ENCODE measurements at regions of chr22 and their contacts with region 1.

Region 1: DNA sequence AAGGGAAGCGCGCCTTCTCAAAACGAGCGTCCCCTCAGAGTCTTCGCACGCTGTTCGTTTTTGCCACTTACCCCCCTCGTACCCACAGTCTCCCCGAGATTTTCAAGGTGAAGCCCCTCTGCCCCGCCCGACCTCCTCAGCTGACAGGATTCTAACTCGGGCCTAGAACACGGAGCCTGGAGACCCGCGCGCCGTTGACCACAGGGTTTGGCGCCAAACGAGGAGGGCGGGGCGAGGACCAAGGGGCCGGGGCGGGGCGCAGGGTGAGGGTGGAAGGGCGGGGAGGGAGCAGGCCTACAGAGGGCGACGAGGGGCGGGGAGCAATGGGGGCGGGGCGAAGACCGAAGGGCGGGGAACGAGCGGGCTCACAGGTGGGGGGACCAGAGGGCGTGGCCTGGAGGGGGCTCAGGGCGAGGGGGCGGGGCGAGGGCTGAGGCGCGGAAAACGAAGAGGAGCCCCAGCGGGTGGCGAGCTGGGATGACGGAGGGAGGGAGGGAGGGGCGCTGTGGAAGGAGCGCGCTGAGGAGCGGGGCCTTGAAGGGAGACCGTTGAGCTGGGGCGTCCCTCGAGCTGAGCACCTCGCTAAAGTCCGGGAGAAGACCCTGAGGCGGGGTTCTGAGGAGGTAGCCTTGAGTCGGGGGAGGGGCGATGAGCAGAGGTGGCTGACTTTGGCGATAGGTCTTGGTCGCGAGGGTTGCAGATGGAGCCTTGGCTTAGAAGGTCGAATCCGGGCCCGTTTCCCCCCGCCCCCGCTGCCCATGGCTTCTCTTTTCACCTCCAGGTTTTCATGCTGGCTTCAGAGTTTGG is at the start of gene DMC1:
- DNase-seq: peak; percentile 96 to 98 (median 98)
- H3K4me3 ChIP-seq: peak within 1 kb of the TSS; percentile 74
- H3K27ac ChIP-seq: peak within 1 kb of the TSS; percentile 65 to 85
- H3K4me1 ChIP-seq: peaks cover 2% of the 10 kb centered on the region
- H3K27me3 ChIP-seq: no peaks in the 10 kb centered on the region
- CTCF ChIP-seq: peak in 1 of 3 donors; percentile 19
- EP300 ChIP-seq: no peak
- POLR2A ChIP-seq: peak; percentile 47
- total RNA-seq, gene DMC1: 0.95 to 12.2 (median 2.1) TPM

Region 2: GRCh38 chr22:38051900-38052862 is 518.0 kb before region 1 on chr22:
- intact Hi-C with region 1: loop called in 3 of 4 experiments (anchors 2 to 5 kb)
- DNase-seq: peak; percentile 67 to 87 (median 81)
- H3K4me3 ChIP-seq: no peak overlapping the region
- H3K27ac ChIP-seq: no peak overlapping the region
- H3K4me1 ChIP-seq: peaks cover 6% of the 10 kb centered on the region
- H3K27me3 ChIP-seq: no peaks in the 10 kb centered on the region
- CTCF ChIP-seq: peak; percentile 43 to 94 (median 89)
- EP300 ChIP-seq: no peak
- POLR2A ChIP-seq: no peak

Region 3: DNA sequence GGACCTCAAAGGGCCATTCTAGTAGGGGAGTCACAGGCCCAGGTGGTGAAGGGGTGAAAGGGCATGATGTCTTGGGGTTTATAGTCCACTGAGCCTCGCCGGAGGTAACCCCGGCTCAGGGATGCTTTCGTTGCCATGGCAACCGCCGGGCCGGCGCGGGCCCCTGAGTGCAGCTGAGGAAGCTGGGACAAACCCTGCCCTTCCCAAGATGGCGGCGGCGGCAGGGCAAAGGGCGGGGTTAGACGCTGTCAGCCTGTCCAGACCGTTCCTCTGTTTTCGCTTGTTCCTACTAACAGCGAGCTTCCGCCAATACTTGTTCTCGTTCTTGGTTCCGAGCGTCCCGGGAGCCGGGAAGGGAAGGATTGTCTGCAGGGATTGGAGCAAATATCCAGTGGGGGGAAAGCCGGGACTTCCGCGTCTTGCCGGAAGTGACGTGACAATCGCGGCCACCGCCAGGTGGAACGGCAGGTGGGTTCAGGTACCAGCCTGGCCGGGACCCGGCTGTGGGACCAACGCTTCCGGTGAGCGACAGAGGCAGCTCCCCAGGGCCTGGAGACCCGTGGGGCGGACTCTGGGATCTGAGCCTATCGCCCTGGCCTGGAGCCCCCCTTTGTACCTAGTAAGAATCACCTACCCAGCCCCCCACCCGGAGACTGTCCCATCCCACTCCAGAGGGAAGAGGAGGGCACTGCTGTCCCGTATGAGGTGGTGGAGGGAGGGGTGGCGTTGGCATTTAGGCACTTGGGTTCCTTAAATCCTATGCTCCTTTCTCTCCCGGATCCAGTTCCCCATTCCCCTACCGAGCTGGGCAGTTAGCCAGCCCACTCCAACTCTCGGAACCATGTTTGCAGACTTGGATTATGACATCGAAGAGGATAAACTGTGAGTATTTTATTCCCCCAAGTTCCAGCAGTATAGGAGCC is 512.9 kb before region 1 on chr22 and contains the start of gene PICK1:
- intact Hi-C with region 1: loop called in 3 of 4 experiments (anchors 2 to 5 kb)
- DNase-seq: peak; percentile 89 to 94 (median 93)
- H3K4me3 ChIP-seq: peak within 1 kb of the TSS; percentile 56
- H3K27ac ChIP-seq: peak within 1 kb of the TSS; percentile 1 to 85
- H3K4me1 ChIP-seq: peaks cover 9% of the 10 kb centered on the region
- H3K27me3 ChIP-seq: no peaks in the 10 kb centered on the region
- CTCF ChIP-seq: peak in 2 of 3 donors; percentile 28 to 34
- EP300 ChIP-seq: no peak
- POLR2A ChIP-seq: peak; percentile 34
- total RNA-seq, gene PICK1: 26.0 to 47.7 (median 35.1) TPM

Region 4: GRCh38 chr22:38506118-38506962 is 63.8 kb before region 1 on chr22 and contains the start of gene DDX17:
- intact Hi-C with region 1: loop called in 1 of 4 experiments (anchors 10 kb)
- DNase-seq: peak; percentile 91 to 96 (median 94)
- H3K4me3 ChIP-seq: peak within 1 kb of the TSS; percentile 67
- H3K27ac ChIP-seq: peak within 1 kb of the TSS; percentile 99 to 100
- H3K4me1 ChIP-seq: peaks cover 3% of the 10 kb centered on the region
- H3K27me3 ChIP-seq: no peaks in the 10 kb centered on the region
- CTCF ChIP-seq: peak in 2 of 3 donors; percentile 30 to 47
- EP300 ChIP-seq: peak; percentile 24
- POLR2A ChIP-seq: peak; percentile 85
- total RNA-seq, gene DDX17: 435 to 602 (median 515) TPM

Region 5: DNA sequence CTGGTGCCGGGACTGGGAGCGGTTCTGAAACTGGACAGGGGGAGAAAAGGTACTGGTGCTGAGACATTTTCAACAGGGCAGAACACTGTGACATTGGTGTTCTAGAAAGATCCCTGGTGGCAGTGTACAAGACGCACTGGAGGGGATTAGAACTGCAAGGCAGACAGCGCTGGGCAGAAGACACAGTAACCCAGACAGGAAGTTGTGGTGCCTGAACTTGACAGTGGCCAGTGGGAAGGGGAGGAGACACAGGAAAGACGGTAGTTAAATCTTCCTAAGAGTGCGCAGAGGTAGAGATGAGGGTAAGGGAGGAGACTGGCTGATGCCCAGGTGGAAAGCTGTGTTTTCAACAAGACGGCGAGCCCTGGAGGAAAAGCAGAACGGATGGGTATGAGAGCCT is 61.5 kb after region 1 on chr22:
- intact Hi-C with region 1: no loop called
- DNase-seq: no peak
- H3K4me3 ChIP-seq: no peak overlapping the region
- H3K27ac ChIP-seq: no peak overlapping the region
- H3K4me1 ChIP-seq: no peaks in the 10 kb centered on the region
- H3K27me3 ChIP-seq: no peaks in the 10 kb centered on the region
- CTCF ChIP-seq: no peak
- EP300 ChIP-seq: no peak
- POLR2A ChIP-seq: no peak

Region 6: DNA sequence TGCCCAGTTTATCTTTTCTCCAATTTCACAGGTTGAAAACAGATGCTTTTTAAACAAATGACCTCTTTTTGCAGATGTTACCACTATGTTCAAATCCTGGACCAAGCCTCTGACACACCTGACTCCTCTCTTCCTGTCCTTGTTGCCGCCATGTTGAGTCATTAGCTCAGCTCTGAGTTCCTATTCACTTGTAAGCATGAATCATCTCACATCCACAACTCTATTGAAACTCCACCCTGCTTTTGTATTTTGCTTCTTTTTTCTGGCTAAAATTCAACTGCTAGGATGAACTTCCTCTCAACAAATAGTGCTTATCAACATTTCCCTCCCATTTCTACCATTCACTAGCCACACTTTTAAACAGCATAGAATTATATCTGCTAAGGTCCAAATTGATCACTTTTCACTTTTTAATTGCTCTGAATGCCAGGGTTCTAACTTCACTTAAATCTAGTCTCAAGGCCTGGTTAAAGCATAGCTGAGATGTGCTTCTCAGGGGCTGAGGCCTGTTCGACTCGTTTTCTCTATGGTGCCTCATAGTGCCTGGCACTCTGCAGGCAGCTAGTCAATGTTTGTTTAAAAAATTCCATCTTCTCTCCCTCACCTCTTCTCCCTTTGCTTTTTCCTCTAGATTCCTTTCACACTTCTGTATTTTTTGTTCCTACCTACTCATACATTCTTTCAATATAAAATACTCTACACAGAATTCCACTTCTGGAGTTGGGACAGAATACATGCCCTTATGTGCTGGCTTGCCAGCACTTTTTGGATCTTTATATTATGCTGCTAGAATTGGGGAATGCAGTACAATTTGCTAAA is 126.6 kb after region 1 on chr22:
- intact Hi-C with region 1: loop called in 1 of 4 experiments (anchors 5 kb)
- DNase-seq: no peak
- H3K4me3 ChIP-seq: no peak overlapping the region
- H3K27ac ChIP-seq: no peak overlapping the region
- H3K4me1 ChIP-seq: peaks cover 14% of the 10 kb centered on the region
- H3K27me3 ChIP-seq: no peaks in the 10 kb centered on the region
- CTCF ChIP-seq: no peak
- EP300 ChIP-seq: no peak
- POLR2A ChIP-seq: no peak

Region 7: DNA sequence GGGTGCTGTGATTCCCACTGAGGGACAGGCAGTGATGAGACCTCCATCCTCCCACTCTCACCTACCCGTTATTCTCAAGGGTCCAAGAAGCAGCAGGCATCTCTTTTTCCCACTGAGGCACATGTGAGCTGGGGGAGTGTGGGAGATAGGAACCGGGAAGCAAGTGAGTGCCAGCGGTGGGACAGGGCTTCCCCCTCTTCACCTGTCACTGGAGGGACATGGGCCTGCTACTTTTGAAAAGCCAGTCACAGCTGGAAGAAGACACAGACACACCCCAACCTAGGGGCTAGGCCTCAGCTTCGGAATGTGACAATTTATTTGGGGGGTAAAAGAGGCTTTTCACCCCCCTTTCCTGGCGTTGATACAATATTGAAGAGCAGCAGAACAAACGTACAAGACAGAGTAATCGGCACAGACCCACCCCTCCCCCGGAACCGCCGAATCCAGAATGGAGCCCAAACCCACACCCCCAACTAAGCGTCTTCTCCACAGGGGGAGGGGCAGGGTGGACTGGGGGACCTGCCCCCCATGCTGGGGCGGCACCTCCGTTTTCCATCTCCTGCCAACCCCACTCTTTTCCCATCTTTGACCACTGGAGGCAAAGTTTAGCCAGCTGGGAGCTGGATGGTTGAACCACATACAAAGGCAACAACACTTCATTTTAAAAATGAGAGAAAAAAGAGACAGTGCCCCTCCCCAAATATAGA is 291.1 kb after region 1 on chr22:
- intact Hi-C with region 1: no loop called
- DNase-seq: peak in 2 of 5 donors; percentile 48 to 54
- H3K4me3 ChIP-seq: no peak overlapping the region
- H3K27ac ChIP-seq: no peak overlapping the region
- H3K4me1 ChIP-seq: peaks cover 27% of the 10 kb centered on the region
- H3K27me3 ChIP-seq: no peaks in the 10 kb centered on the region
- CTCF ChIP-seq: peak in 1 of 3 donors; percentile 10
- EP300 ChIP-seq: no peak
- POLR2A ChIP-seq: no peak

Region 8: GRCh38 chr22:39236321-39237317 is 666.4 kb after region 1 on chr22:
- intact Hi-C with region 1: no loop called
- DNase-seq: no peak
- H3K4me3 ChIP-seq: no peak overlapping the region
- H3K27ac ChIP-seq: no peak overlapping the region
- H3K4me1 ChIP-seq: peaks cover 1% of the 10 kb centered on the region
- H3K27me3 ChIP-seq: no peaks in the 10 kb centered on the region
- CTCF ChIP-seq: no peak
- EP300 ChIP-seq: no peak
- POLR2A ChIP-seq: no peak

Measured in ovary (tissue), 10 donors.